CD4-positive, alpha-beta memory T cell (primary cell): ENCODE measurements at regions of chr17 and their contacts with region 1.

Region 1: GRCh38 chr17:28552246-28552999 is at the start of gene UNC119:
- DNase-seq: peak; percentile 74 to 79 (median 75)
- H3K4me3 ChIP-seq: peak within 1 kb of the TSS; percentile 29 to 66
- H3K4me3 Mint-ChIP-seq: peak within 1 kb of the TSS; percentile 89 to 98 (median 92)
- H3K27ac ChIP-seq: peak within 1 kb of the TSS; percentile 84
- H3K27ac Mint-ChIP-seq: peak within 1 kb of the TSS; percentile 94 to 98 (median 96)
- H3K4me1 ChIP-seq: peaks cover 48% of the 10 kb centered on the region
- H3K4me1 Mint-ChIP-seq: peaks cover 41 to 55% (median 48%) of the 10 kb centered on the region in 4 donors
- H3K27me3 ChIP-seq: no peaks in the 10 kb centered on the region
- H3K27me3 Mint-ChIP-seq: no peaks in the 10 kb centered on the region
- total RNA-seq, gene UNC119: 38.8 to 39.6 TPM

Region 2: DNA sequence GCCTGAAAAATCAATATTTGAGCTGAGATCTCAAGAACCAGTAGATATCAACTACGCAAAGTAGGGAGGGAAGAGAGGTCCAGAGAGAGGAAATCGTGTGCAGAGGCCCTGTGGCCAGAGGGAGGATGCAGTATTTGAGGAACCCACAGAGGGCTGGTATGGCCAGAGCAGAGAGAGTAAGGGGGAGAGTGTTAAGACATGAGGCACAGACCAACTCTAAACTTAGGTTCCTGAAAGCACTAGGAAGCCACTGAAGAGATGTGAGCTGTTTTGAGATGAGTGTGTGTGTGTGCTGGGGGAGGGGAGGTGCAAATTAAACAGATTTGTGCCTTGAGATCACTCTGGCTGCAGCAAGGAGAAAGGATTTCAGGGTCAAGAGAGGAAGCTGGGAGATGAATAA is 68.1 kb before region 1 on chr17:
- CTCF ChIA-PET with region 1: no interaction called
- POLR2A ChIA-PET with region 1: no interaction called
- intact Hi-C with region 1: no loop called
- DNase-seq: no peak
- H3K4me3 ChIP-seq: no peak overlapping the region
- H3K4me3 Mint-ChIP-seq: no peak overlapping the region
- H3K27ac ChIP-seq: no peak overlapping the region
- H3K27ac Mint-ChIP-seq: peak overlapping the region in 1 of 7 donors; percentile 4
- H3K4me1 ChIP-seq: no peaks in the 10 kb centered on the region
- H3K4me1 Mint-ChIP-seq: no peaks in the 10 kb centered on the region
- H3K27me3 ChIP-seq: no peaks in the 10 kb centered on the region
- H3K27me3 Mint-ChIP-seq: no peaks in the 10 kb centered on the region

Region 3: GRCh38 chr17:28494445-28495188 is 57.8 kb before region 1 on chr17:
- CTCF ChIA-PET with region 1: interaction called, 4 read pairs
- POLR2A ChIA-PET with region 1: no interaction called
- intact Hi-C with region 1: loop called (anchors 1 kb)
- DNase-seq: peak; percentile 68 to 74 (median 71)
- H3K4me3 ChIP-seq: no peak overlapping the region
- H3K4me3 Mint-ChIP-seq: no peak overlapping the region
- H3K27ac ChIP-seq: no peak overlapping the region
- H3K27ac Mint-ChIP-seq: peak overlapping the region in 1 of 7 donors; percentile 46
- H3K4me1 ChIP-seq: no peaks in the 10 kb centered on the region
- H3K4me1 Mint-ChIP-seq: no peaks in the 10 kb centered on the region
- H3K27me3 ChIP-seq: no peaks in the 10 kb centered on the region
- H3K27me3 Mint-ChIP-seq: peaks cover 0 to 6% of the 10 kb centered on the region in 2 donors

Region 4: DNA sequence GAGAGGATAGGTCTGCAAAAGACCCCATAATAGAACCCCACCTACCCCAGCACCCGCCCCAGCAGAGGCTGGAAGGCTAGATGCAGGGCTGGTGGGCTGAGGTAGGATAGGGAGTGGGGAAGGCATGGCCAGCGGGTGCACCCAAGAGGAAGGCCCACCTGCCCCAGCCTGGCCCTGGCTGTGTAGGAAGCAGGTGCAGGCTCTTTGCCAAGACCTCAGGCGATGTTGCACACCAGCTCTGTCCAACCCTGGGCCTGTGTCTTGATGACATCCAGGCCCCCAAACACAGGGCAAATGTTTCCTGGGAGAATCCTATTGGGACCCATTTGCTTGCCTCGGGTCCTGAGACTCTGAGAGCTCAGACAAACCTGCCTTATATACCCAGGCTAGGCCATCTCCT is 12.2 kb before region 1 on chr17:
- CTCF ChIA-PET with region 1: interaction called, 11 read pairs
- POLR2A ChIA-PET with region 1: no interaction called
- intact Hi-C with region 1: no loop called
- DNase-seq: no peak
- H3K4me3 ChIP-seq: no peak overlapping the region
- H3K4me3 Mint-ChIP-seq: no peak overlapping the region
- H3K27ac ChIP-seq: no peak overlapping the region
- H3K27ac Mint-ChIP-seq: peak overlapping the region in 3 of 7 donors; percentile 52 to 70 (median 60)
- H3K4me1 ChIP-seq: no peaks in the 10 kb centered on the region
- H3K4me1 Mint-ChIP-seq: peaks cover 0 to 2% (median 0%) of the 10 kb centered on the region in 4 donors
- H3K27me3 ChIP-seq: no peaks in the 10 kb centered on the region
- H3K27me3 Mint-ChIP-seq: no peaks in the 10 kb centered on the region

Region 5: DNA sequence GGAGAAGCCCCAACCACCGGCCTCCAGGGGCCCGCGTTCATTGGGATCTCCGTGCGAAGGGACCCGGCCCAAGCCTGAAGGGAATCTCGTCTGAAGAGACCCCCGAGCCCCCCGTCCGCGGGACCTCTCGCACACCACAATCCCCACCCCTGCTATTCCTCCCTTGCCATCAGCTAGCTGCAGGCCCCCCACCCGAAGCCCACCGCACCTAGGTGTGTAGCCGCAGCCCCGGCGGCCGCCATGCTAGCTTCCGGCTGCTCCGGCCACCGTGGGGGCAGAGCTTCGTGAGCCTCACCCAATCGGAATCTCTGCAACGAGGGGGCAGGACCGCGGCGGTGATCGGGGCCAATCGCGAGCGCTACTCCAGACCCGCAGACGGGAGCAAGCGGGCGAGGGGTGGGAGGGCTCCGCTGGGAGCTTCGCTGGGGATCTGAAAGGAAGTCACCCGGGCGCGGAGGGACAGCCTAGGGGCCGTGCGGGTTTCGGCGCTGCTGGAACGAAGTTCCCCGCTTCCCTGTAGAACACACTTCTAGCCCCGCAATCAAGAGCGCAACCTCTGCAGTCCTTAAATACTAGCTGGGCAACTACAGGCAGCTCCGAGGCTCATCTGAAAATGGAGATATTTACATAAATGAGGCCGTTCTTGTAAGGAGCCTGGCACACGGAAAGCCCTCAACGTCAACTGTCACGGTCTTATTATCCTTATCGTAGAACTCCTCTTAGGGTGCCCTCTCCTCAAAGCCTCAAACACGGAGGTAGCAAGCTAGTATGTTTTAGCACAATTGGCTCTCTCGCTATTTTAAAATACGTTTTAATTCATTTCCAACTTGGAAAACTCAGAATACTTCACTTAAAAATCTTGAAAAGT is 19.1 kb after region 1 on chr17 and contains the start of gene PIGS:
- CTCF ChIA-PET with region 1: interaction called, 26 read pairs
- POLR2A ChIA-PET with region 1: interaction called, 48 read pairs
- intact Hi-C with region 1: loop called (anchors 1 kb)
- DNase-seq: peak; percentile 84 to 93 (median 87)
- H3K4me3 ChIP-seq: peak within 1 kb of the TSS; percentile 59 to 93
- H3K4me3 Mint-ChIP-seq: peak within 1 kb of the TSS; percentile 96 to 99 (median 97)
- H3K27ac ChIP-seq: peak within 1 kb of the TSS; percentile 79
- H3K27ac Mint-ChIP-seq: peak within 1 kb of the TSS; percentile 80 to 98 (median 97)
- H3K4me1 ChIP-seq: peaks cover 68% of the 10 kb centered on the region
- H3K4me1 Mint-ChIP-seq: peaks cover 41 to 82% (median 57%) of the 10 kb centered on the region in 4 donors
- H3K27me3 ChIP-seq: no peaks in the 10 kb centered on the region
- H3K27me3 Mint-ChIP-seq: no peaks in the 10 kb centered on the region
- total RNA-seq, gene PIGS: 57.9 to 58.2 TPM

Region 6: GRCh38 chr17:28576758-28577465 is 24.5 kb after region 1 on chr17 and contains the start of gene ALDOC:
- CTCF ChIA-PET with region 1: interaction called, 26 read pairs
- POLR2A ChIA-PET with region 1: interaction called, 48 read pairs
- intact Hi-C with region 1: no loop called
- DNase-seq: peak; percentile 97 to 98 (median 98)
- H3K4me3 ChIP-seq: peak within 1 kb of the TSS; percentile 20 to 51
- H3K4me3 Mint-ChIP-seq: peak within 1 kb of the TSS; percentile 81 to 89 (median 84)
- H3K27ac ChIP-seq: peak within 1 kb of the TSS; percentile 59
- H3K27ac Mint-ChIP-seq: peak within 1 kb of the TSS; percentile 79 to 92 (median 90)
- H3K4me1 ChIP-seq: peaks cover 35% of the 10 kb centered on the region
- H3K4me1 Mint-ChIP-seq: peaks cover 23 to 45% (median 30%) of the 10 kb centered on the region in 4 donors
- H3K27me3 ChIP-seq: no peaks in the 10 kb centered on the region
- H3K27me3 Mint-ChIP-seq: no peaks in the 10 kb centered on the region
- total RNA-seq, gene ALDOC: 30.1 to 33.7 TPM

Region 7: DNA sequence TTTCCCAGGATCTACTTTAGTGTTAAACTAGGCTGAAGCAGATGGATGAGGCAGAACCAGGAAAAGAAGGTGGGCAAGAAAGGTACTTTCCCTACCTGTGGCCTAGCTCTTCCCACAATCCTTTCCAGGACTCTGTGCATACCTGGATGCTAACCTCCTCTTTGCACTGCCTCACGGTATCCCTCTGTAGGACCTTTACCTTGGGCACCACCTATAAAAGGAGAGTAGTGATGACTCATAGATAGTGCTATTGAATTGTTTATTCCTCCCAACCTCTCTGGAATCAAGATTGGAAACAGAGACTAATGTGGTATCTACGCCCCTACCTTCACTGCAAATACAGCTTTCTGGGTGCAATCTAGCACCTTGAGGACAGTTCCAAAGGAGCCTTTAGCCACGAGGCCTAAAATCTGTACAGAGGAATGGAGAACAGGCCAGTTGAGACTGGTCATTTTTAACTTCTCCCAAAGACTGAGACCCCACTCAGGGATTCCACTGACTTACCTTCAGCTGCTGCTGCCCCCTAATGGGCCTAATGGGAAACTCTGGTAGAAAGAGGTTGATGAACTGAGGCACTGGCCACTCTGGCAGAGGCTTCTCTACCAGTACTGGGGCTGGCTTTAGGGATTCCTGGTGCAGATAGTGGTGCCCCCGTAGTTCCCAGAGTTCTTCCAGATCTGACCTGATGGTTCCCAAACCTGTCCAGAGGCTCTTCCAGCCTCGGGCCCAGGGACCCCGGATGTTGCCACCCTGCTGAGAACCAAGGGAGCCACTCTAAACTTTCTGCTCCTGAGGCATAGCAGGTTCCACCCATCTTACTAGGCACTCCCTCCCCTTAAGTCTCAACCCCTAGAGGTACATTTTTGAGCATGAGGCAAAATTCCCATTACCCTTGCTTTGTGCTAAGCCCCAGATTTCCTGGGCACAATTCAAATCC is 60.8 kb after region 1 on chr17:
- CTCF ChIA-PET with region 1: interaction called, 36 read pairs
- POLR2A ChIA-PET with region 1: no interaction called
- intact Hi-C with region 1: loop called (anchors 1 kb)
- DNase-seq: peak in 4 of 5 donors; percentile 19 to 40 (median 40)
- H3K4me3 ChIP-seq: no peak overlapping the region
- H3K4me3 Mint-ChIP-seq: no peak overlapping the region
- H3K27ac ChIP-seq: no peak overlapping the region
- H3K27ac Mint-ChIP-seq: peak overlapping the region in 6 of 7 donors; percentile 24 to 65 (median 36)
- H3K4me1 ChIP-seq: no peaks in the 10 kb centered on the region
- H3K4me1 Mint-ChIP-seq: peaks cover 4 to 13% (median 10%) of the 10 kb centered on the region in 4 donors
- H3K27me3 ChIP-seq: no peaks in the 10 kb centered on the region
- H3K27me3 Mint-ChIP-seq: no peaks in the 10 kb centered on the region

Region 8: DNA sequence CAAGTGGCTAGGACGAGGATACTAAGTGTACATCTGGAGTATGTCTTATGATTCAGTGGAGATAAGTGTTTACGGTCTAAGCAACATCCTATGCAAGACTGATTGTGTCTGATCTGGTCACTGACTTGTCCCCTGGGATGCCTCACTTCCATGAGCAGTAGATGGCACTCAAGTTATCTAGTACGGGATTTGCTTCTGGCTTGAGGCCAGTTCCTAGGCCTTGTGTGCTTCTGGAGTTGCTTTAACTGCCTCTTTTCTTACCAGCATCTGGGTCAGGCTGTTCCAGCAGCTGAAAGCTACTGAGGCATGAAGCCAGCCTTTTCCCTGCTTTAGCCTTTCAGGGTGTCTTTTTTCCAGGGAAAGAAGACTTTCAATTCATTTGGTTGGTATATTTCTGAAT is 132.5 kb after region 1 on chr17:
- CTCF ChIA-PET with region 1: no interaction called
- POLR2A ChIA-PET with region 1: no interaction called
- intact Hi-C with region 1: no loop called
- DNase-seq: no peak
- H3K4me3 ChIP-seq: no peak overlapping the region
- H3K4me3 Mint-ChIP-seq: no peak overlapping the region
- H3K27ac ChIP-seq: no peak overlapping the region
- H3K27ac Mint-ChIP-seq: peak overlapping the region in 1 of 7 donors; percentile 49
- H3K4me1 ChIP-seq: no peaks in the 10 kb centered on the region
- H3K4me1 Mint-ChIP-seq: peaks cover 0 to 6% (median 0%) of the 10 kb centered on the region in 4 donors
- H3K27me3 ChIP-seq: no peaks in the 10 kb centered on the region
- H3K27me3 Mint-ChIP-seq: no peaks in the 10 kb centered on the region